ENCODE measurements at regions of chr2 and their contacts with region 1.

Region 1: GRCh38 chr2:227657199-227657845 is 9.3 kb upstream of the SCYGR5 start:
- DNase-seq: no peak
- H3K4me3 ChIP-seq: no peak overlapping the region
- CTCF ChIP-seq: no peak

Region 2: DNA sequence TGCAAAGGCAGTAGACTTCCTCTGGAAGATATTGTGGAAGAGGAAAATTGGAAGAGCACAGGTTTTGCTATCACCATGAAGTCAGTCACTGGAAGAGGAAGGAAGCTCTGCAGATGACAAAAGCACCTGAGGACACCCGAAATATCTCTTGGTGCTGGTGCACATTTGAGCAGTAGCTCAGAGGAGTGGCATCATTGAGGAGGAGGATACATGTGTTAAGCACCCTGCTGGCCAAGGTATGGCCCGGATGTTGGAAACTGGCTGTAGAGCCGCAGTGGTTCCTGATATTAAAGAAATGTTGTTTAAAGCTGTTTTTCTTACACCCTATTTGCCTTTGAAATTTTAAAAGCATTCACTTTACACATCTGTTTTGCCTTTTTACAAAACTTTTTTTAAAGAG is 91.3 kb before region 1 on chr2:
- CTCF ChIA-PET with region 1: no interaction called
- POLR2A ChIA-PET with region 1: no interaction called
- DNase-seq: no peak
- H3K4me3 ChIP-seq: no peak overlapping the region
- CTCF ChIP-seq: no peak

Region 3: DNA sequence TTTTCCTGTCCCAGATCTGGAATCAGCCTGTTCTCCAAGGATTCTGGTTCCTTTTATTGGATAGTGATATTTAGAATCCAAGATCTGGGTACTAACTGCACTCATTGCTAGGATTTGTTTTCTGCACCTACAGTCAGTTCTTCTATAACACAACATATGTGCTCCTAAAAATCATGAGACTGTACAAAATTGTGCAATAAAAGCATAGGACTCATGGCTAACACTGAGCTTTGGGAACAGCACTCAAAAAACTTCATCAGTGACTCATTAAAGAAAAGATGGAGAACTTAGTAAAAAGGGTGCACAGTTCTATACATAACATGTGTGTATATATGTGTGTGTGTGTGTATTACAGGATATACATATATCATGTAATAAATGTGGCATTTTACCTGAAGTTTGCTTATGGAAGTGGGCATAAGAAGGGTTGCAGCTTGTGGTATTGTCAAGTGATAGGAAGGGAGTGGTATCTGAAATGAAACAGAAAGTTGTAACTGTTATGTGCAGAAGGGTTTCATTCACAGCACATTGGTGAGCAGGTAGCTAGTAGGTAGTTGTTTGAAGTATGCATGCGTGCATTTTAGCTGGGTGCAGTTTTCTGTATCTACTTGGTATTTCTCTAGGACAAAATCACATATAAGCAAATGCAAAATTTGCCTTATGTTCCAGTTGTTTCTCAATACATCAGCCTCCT is 64.5 kb before region 1 on chr2:
- CTCF ChIA-PET with region 1: no interaction called
- POLR2A ChIA-PET with region 1: no interaction called
- DNase-seq: no peak
- H3K4me3 ChIP-seq: no peak overlapping the region
- CTCF ChIP-seq: no peak

Region 4: DNA sequence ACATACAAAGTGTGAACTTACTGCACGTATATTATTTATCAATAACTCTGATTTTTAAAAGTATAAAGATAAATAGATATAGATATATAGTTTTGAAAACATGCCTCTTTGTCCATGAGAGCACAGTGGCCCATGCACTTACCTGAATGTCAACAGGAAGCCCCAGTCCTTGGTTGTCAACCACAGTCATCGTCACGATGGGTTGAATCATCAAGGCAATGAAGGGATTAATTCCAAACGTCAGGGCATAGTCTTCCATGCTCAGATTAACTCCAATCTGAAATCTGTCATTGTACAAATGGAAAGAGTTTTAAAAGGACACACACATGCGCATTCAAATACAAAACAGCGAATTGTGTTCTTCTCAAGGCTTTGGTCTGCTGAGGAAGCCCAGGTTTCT is 24.5 kb before region 1 on chr2:
- CTCF ChIA-PET with region 1: interaction called, 21 read pairs
- POLR2A ChIA-PET with region 1: no interaction called
- DNase-seq: no peak
- H3K4me3 ChIP-seq: no peak overlapping the region
- CTCF ChIP-seq: no peak

Region 5: GRCh38 chr2:227643990-227644551 is 13.3 kb before region 1 on chr2:
- CTCF ChIA-PET with region 1: interaction called, 10 read pairs
- POLR2A ChIA-PET with region 1: no interaction called
- DNase-seq: no peak
- H3K4me3 ChIP-seq: no peak overlapping the region
- CTCF ChIP-seq: no peak

Region 6: DNA sequence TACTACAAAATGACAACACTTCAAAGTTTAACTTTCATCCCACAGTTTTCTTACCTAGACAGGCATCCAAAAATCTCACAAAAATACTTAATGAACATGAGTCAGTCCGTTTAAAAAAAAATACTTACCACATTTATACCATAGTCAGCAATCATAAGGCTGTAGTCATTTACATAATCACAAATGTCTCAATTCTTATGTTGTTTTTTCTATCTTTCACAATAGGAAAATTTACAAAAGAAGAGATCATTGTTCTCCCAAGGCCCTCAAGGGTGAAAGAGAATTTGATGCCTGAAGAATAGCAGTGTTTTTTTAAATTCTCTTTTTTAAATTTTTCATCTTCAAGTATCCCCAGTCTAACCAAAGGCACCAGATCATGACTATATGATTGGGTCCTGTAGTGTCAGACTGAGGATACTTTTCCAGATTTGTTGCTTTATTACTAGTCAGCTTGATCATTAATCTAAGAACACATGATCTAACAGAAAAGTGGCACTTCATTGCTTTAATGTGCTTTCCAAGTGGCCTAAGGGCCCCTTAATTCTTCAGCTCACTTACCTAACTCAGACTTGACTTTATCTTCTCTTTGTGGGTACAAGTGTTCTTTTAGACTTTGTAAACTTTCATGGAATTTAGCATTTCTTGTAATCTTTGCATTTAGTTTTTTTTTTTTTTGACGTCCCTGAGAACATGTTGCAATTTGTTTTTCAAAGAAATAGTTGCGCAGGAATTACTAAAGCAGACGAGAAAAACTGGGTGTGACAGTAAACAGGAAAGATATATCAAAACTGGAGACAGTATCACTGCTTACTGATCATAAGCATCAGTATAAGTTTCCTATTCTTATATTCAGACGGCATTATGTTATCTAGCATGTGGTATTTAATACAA is 14.1 kb after region 1 on chr2:
- CTCF ChIA-PET with region 1: interaction called, 10 read pairs
- POLR2A ChIA-PET with region 1: no interaction called
- DNase-seq: no peak
- H3K4me3 ChIP-seq: no peak overlapping the region
- CTCF ChIP-seq: no peak

Region 7: DNA sequence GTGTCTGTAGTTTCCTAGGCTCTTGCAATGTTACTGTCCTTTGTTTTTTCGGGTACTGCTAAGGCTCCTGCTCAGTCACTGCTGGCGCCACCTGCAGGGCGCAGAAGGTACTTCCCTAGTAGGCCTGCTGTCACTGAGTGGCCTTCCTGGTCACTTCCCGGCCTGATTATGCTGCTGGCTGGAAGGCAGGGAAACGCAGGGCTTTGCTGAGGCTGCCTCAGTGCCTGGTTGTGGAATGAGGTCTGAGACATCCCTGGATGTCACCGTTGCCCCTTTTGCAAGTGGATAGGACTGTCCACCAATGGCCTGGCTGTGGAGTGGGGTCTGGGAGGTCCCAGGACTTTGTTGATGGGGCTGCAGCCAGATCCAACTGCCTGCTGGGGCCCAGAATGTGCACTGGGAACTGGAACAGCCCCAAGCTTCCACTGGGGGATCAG is 227.2 kb after region 1 on chr2:
- CTCF ChIA-PET with region 1: interaction called, 30 read pairs
- POLR2A ChIA-PET with region 1: no interaction called
- DNase-seq: no peak
- H3K4me3 ChIP-seq: no peak overlapping the region
- CTCF ChIP-seq: peak; percentile 96